BJ (cell line): ENCODE measurements at regions of chr1 and their contacts with region 1.

Region 1: DNA sequence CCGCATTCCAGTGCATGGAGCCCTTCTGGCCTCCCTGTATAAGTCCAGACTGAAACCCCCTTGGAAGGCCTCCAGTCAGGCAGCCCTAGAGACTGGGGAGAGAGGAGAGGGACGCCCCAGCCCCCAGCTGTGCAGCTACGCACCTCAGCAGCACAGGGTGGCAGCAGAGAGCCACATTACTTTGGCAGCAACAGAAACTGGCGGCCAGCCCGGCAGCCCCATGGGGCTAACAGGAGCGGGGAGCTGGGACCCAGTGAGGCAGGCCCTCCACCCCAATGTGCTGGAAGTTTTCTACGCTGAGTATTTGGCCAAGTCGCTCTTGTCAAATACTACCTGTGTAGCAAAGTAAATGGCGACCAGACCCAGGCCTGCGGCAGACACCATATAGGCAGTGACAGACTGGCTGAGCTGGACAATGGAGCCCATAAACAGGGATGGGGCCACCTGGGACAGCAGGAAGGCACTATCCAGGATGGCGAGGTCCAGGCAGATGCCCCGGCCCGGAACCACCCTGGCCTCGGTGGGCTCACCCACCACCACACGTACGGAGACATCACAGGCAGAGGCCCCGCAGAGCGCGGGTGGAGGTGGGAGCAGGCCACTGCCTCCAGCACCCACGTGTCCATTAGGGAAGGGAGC is 21.2 kb downstream of the SLC45A3 start:
- DNase-seq: no peak
- H3K4me3 ChIP-seq: no peak overlapping the region
- H3K27me3 ChIP-seq: no peaks in the 10 kb centered on the region
- CTCF ChIP-seq: peak; percentile 92

Region 2: DNA sequence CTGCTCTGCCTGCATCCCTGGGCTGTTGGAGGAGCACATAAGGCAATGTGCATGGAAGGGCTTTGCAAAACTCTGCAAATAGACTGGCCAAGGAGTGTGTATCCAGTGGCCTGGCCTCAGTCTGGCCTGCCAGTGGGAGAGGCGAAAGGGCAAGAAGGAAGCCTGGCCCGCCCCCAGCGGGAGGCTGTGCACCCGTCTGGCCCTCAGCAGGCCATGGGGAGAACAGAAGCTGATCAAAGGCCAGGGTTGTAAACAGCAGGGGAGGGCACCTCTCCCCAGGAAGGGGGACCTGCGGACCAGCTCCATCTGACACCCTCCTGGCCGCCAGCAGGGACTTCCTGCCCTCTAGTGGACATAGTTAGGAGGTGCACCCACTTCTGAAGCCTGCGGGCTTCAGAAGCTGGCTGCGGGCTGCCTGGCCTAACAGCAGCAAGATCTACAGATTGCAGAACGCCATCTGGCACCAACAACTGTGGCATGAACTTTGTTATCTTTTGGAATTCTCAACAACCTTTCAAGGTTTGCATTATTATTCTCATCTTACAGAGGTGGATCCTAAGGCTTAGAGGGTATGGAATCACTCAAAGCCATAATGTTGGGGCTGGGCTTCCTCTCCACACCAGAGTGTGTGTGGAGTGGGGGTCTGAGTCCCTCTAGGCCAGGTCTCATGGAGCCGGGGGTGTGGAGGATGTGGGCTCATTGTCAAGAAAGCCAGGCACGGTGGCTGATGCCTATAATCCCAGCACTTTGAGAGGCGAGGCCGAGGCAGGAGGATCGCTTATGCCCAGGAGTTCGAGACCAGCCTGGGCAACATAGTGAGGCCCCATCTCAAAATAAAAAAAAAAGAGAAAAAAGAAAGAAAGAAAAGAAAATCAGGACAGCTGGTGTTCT is 173.5 kb before region 1 on chr1:
- CTCF ChIA-PET with region 1: interaction called, 14 read pairs
- POLR2A ChIA-PET with region 1: no interaction called
- DNase-seq: no peak
- H3K4me3 ChIP-seq: no peak overlapping the region
- H3K27me3 ChIP-seq: peaks cover 31% of the 10 kb centered on the region
- CTCF ChIP-seq: peak; percentile 98

Region 3: DNA sequence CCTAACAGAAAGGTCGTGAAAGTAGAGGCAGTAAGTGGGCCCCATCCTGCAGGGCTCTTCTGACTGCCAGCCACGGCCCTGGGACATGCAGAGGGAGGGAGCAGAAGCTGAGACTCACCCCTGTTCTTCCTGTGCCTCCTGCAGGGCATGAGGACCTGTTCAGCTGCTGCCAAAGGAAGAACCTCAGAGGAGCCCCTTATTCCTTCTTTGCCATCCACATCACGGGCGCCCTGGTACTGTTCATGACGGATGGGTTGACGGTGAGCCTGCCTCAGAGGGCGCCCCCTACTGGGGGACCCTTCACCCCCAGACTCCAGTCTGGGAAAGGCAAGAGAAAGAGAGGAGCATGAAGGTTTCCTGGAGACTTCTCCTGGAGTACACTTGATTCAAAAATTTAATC is 74.3 kb before region 1 on chr1:
- CTCF ChIA-PET with region 1: interaction called, 426 read pairs
- POLR2A ChIA-PET with region 1: no interaction called
- DNase-seq: no peak
- H3K4me3 ChIP-seq: no peak overlapping the region
- H3K27me3 ChIP-seq: peaks cover 20% of the 10 kb centered on the region
- CTCF ChIP-seq: peak; percentile 29; the same call in 1 of the 2 replicates

Region 4: GRCh38 chr1:205631727-205632373 is 27.2 kb before region 1 on chr1 and contains the start of gene ELK4:
- CTCF ChIA-PET with region 1: interaction called, 14 read pairs
- POLR2A ChIA-PET with region 1: no interaction called
- DNase-seq: peak; percentile 80
- H3K4me3 ChIP-seq: peak within 1 kb of the TSS; percentile 63
- H3K27me3 ChIP-seq: no peaks in the 10 kb centered on the region
- CTCF ChIP-seq: peak; percentile 78
- polyA plus RNA-seq, gene ELK4: 3.4 and 5.7 TPM in 2 replicates

Region 5: DNA sequence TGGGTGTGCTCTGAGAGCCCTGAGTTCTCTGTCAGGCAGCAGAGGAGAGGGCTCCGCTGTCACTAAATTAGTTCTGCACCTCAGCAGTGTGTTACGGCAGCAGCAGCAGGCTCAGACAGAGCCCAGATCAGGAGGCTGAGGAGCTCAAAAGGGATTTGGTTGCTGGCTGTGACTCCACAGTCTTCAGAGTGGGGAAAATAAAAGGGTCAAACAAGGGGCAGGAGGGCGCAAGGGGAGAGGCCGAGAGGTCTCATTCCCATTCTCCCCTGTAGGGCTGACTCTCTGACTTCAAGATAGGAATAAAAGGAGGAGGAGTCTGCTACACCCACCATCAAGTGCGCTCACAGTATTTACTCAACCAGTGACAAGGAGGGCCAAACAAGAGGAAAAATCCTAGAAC is 30.4 kb after region 1 on chr1:
- CTCF ChIA-PET with region 1: interaction called, 12 read pairs
- POLR2A ChIA-PET with region 1: no interaction called
- DNase-seq: no peak
- H3K4me3 ChIP-seq: no peak overlapping the region
- H3K27me3 ChIP-seq: no peaks in the 10 kb centered on the region; the same call in none of the 2 replicates
- CTCF ChIP-seq: no peak

Region 6: DNA sequence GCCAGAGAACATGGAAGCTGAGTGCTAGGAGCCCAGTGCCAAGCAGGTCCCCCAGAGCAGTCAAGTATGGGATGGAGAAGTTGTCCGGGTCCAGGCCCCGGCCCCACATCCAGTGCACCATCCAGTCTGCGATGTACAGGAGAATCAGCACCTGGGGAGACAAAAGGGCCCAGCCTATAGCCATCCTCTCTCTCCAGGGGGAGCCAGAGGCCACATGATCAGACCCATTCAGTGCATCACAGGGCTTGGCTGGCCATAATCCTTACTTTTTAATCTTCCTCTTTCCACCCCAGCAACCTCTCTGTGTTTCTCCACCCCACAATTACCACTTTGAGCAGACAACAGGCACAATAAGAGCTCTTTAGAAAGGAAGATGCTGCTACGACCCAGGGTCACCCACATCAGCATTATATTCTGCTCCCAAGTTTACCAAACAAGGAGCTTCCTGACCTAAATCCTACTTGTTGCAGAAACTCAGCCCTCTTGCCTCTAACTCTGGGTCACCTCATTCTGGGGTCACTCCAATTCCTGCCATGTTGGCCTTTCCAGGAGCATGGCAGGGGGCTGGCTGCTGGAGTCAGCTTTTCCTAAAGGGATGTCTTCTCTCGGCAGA is 132.6 kb after region 1 on chr1:
- CTCF ChIA-PET with region 1: interaction called, 31 read pairs
- POLR2A ChIA-PET with region 1: no interaction called
- DNase-seq: no peak
- H3K4me3 ChIP-seq: no peak overlapping the region
- H3K27me3 ChIP-seq: no peaks in the 10 kb centered on the region
- CTCF ChIP-seq: peak; percentile 87

Region 7: GRCh38 chr1:205977402-205978014 is 318.4 kb after region 1 on chr1:
- CTCF ChIA-PET with region 1: interaction called, 90 read pairs
- POLR2A ChIA-PET with region 1: no interaction called
- DNase-seq: no peak
- H3K4me3 ChIP-seq: no peak overlapping the region
- H3K27me3 ChIP-seq: no peaks in the 10 kb centered on the region
- CTCF ChIP-seq: peak; percentile 96